ENCODE measurements at regions of chr7 and their contacts with region 1.

Region 1: DNA sequence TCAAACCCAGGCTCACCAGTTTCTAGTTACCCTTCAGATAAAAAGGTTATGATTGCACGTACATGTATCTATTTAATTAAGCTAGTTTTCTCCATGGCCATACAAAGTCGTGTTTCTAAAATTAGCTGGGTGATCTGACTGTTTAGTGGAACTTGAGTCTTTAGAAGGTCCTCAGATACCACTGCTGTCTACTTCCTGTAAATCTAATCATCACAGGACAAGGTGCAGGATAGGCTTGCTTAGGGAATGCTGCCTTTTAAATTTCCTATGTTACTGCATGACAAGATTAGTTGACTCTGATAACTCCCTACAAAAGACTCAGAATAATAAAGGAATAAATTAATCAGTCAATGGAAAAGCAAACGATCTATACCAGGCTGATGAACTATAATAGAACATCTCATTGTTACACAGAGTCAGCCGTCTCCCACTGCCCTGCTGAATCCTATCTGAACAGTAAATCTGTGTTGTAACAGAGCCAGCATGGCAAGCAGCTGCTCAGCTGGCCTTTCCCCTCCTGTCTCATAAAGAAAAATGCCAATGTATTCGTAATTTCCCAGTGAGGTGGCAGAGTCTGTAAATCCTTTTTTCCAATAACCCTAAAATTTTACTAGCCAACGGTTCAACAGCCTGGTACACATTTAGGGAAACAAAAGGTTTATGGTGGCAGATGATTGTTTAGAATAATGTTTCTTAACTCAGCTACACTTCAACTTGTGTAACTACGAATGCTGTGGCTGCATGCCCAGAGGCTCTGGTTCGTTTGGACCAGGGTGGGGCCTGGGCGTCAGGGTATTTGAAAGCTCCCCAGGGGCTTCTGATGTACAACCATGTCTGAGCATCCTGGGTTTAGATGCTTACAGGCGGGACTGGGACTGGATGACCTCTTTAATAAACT is 318.0 kb downstream of the PAXIP1 start:
- DNase-seq: no peak
- H3K4me3 ChIP-seq: no peak overlapping the region
- H3K27ac ChIP-seq: no peak overlapping the region
- H3K4me1 ChIP-seq: no peaks in the 10 kb centered on the region
- H3K27me3 ChIP-seq: no peaks in the 10 kb centered on the region
- CTCF ChIP-seq: no peak
- POLR2A ChIP-seq: no peak

Region 2: GRCh38 chr7:153808117-153808516 is 876.8 kb before region 1 on chr7:
- intact Hi-C with region 1: no loop called
- DNase-seq: no peak
- H3K4me3 ChIP-seq: no peak overlapping the region
- H3K27ac ChIP-seq: no peak overlapping the region
- H3K4me1 ChIP-seq: no peaks in the 10 kb centered on the region
- H3K27me3 ChIP-seq: no peaks in the 10 kb centered on the region
- CTCF ChIP-seq: no peak
- POLR2A ChIP-seq: no peak

Region 3: DNA sequence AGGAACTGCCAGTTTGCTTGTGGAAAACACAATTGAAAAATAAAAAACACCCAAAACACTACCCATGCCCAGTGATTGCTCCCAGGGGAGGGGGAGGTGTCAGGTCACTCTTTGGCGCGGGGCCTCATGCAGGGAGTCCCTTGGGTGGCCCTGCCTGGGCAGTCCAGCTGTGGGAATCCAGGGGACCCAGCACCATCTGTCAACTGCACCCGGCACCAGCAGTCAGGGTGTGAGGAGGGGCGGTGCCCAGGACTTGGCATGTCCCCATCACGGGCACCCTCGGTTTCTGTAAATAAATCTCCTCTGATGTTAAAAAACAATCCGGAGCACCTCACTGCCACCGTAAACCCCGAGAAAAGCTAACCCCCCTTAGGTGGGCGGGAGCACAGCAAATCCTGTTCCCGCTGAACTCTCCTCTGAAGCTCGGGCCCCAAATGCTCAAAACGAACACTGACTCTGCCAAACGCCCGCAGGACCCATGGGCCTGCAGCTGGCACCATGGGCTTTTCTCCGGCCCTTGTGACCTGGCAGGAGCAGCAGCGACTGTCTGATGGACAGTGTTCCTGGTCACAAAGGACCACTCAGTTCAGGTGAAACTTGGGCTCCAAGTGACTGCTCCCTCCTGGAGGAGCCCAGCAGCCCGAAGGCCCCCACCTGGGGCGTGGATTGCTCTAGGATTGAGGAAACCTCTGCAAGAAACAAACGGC is 754.5 kb after region 1 on chr7:
- intact Hi-C with region 1: loop called (anchors 5 kb)
- DNase-seq: no peak
- H3K4me3 ChIP-seq: no peak overlapping the region
- H3K27ac ChIP-seq: no peak overlapping the region
- H3K4me1 ChIP-seq: no peaks in the 10 kb centered on the region
- H3K27me3 ChIP-seq: peaks cover 0 to 79% of the 10 kb centered on the region in 2 donors
- CTCF ChIP-seq: no peak
- POLR2A ChIP-seq: no peak

Region 4: DNA sequence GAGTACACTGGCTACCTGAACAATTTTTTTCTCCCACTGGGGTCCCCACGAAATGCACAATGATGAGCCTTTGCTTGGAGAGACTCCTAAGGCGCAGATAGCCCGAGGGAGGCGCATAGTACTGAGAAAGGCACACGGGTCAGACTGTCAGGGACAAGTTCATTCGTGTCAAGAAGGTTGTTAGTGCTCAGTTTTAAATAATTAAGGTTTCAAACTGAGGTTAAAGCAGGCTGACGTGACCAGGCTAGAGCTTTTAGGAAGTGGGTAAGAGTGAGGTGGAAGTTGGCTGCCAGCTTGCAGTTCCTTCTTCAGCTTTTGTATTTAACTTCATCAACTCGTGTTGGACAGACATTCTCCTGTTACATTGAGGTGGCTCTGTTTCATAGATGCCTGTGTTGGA is 991.1 kb after region 1 on chr7:
- intact Hi-C with region 1: no loop called
- DNase-seq: no peak
- H3K4me3 ChIP-seq: no peak overlapping the region
- H3K27ac ChIP-seq: no peak overlapping the region
- H3K4me1 ChIP-seq: no peaks in the 10 kb centered on the region
- H3K27me3 ChIP-seq: no peaks in the 10 kb centered on the region
- CTCF ChIP-seq: no peak
- POLR2A ChIP-seq: no peak